Gastrocnemius medialis (tissue), 4 donors: ENCODE measurements at regions of chr6 and their contacts with region 1.

Region 1: DNA sequence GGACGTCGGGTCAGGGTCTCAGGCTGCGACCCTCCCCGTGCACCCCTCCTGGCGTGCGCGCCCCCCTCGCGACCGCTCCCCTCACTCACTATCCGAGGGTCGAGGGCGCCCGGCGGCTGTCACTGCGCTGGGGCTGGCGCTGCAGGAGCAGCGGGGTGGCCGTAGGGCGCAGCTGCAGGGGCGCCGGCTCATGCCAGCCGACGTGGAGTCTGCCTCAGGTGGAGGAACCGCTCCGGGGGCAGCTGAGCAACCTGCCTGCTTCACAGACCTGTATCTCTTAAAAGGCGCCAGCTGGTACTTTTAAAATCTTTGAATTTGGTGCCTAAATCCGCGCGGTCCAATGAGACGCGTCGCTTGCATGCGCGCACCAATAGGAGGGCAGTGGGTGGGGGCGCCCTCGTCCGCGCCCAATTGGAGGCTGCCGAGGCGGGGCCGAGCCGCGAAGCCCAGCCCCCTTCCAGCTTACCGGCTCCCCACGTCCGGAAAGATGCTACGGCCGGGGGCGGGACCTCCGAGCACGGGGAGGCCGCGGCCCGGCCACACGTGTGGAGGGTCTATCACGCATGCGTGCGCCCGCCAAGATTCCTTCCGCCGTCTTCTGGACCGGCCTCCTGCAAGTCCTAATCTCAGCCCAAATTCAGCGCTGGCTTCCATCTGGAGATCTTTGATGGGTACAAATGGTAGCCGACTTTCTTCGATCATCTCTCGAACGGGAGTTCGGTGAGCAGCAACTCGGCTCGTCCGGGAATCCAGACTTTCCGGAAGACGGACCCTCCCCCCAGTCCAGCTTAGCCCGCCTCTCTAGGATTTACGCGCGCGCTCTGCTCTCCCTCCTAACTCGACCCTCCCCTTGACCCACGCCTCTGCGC is at the start of gene FBXO5:
- DNase-seq: peak; percentile 95 to 97
- ATAC-seq: peak; percentile 92 to 94
- H3K4me3 ChIP-seq: peak within 1 kb of the TSS; percentile 68 to 80 (median 76)
- H3K27ac ChIP-seq: peak within 1 kb of the TSS; percentile 87 to 97 (median 93)
- H3K4me1 ChIP-seq: peaks cover 17 to 23% of the 10 kb centered on the region in 2 donors
- H3K27me3 ChIP-seq: no peaks in the 10 kb centered on the region
- CTCF ChIP-seq: no peak
- POLR2A ChIP-seq: peak; percentile 46 to 67
- total RNA-seq, gene FBXO5: 0.78 to 1.9 (median 1.0) TPM

Region 2: DNA sequence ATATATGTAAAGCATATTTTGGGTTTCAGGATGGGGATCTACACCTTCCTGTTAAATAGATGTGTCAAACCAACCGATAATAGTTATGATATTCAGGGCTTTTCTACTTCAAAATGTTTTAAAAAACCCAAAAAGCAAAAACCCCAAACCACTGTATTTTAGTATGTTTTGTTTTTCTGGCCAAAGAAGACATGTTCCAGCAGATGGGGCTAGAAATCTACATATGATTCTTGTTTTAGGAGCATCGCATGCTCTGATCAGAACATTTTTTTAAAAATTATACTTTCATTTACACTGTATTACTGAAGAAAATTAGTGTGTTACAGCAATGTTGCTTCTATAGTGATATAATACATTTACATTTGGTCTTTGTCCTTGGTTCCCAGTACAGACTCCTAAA is 1542.1 kb before region 1 on chr6:
- in situ Hi-C with region 1: loop called in 1 of 4 experiments (anchors 25 kb)
- intact Hi-C with region 1: no loop called
- DNase-seq: no peak
- ATAC-seq: no peak
- H3K4me3 ChIP-seq: no peak overlapping the region
- H3K27ac ChIP-seq: peak overlapping the region in 1 of 4 donors; percentile 1
- H3K4me1 ChIP-seq: peaks cover 14 to 41% of the 10 kb centered on the region in 2 donors
- H3K27me3 ChIP-seq: no peaks in the 10 kb centered on the region
- CTCF ChIP-seq: peak in 2 of 5 experiments; percentile 14 to 32
- POLR2A ChIP-seq: no peak

Region 3: GRCh38 chr6:153002607-153003365 is 19.8 kb after region 1 on chr6 and contains the start of gene MTRF1L:
- in situ Hi-C with region 1: no loop called
- intact Hi-C with region 1: loop called (anchors 2 kb)
- DNase-seq: peak; percentile 87 to 88
- ATAC-seq: peak; percentile 98 to 99
- H3K4me3 ChIP-seq: peak within 1 kb of the TSS; percentile 74 to 89 (median 84)
- H3K27ac ChIP-seq: peak within 1 kb of the TSS; percentile 81 to 93 (median 88)
- H3K4me1 ChIP-seq: peaks cover 32 to 37% of the 10 kb centered on the region in 2 donors
- H3K27me3 ChIP-seq: no peaks in the 10 kb centered on the region
- CTCF ChIP-seq: peak in 2 of 5 experiments; percentile 1 to 22
- POLR2A ChIP-seq: peak; percentile 75 to 86
- total RNA-seq, gene MTRF1L: 17.8 to 24.9 (median 22.5) TPM